ENCODE measurements at regions of chr11 and their contacts with region 1.

Region 1: DNA sequence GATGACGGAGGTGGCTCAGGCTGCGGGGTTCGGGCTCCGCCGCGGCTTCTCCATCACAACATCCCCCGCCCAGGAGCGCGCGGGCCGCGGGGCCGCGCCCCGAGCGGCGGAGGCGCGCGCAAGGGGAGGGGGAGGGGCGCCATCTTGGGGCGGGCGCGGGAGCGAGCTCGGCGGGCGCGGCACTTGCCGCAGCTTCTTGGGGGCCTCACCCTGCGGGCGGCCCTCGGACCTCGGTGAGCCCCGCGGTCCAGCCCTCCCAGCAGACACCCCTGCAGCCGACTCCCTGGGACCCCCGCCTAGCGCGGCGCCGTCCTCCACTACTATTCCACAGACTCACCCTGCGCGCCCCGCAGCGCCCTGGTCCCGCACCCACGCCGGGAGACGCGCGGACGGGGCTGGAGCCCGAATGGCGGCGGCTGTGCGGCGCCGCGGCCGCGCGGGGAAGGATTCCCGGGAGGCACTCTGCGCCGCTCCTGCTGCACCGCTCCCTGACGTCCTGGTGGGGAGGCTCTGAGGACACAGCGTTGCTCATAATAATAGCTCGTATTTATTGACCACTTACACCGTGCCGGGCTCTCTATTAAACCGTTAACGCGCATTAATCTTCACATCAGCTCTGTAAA is at the start of gene APBB1:
- DNase-seq: no peak
- H3K4me3 ChIP-seq: peak within 1 kb of the TSS; percentile 87
- H3K27me3 ChIP-seq: peaks cover 4% of the 10 kb centered on the region
- CTCF ChIP-seq: peak; percentile 19; the same call in 1 of the 2 replicates
- polyA plus RNA-seq, gene APBB1: 39.5 and 62.5 TPM in 2 replicates

Region 2: GRCh38 chr11:6431861-6432260 is 12.7 kb after region 1 on chr11:
- CTCF ChIA-PET with region 1: interaction called, 14 read pairs
- POLR2A ChIA-PET with region 1: no interaction called
- DNase-seq: no peak
- H3K4me3 ChIP-seq: no peak overlapping the region
- H3K27me3 ChIP-seq: no peaks in the 10 kb centered on the region
- CTCF ChIP-seq: no peak

Region 3: GRCh38 chr11:6544921-6545850 is 126.1 kb after region 1 on chr11:
- CTCF ChIA-PET with region 1: no interaction called
- POLR2A ChIA-PET with region 1: no interaction called
- DNase-seq: no peak
- H3K4me3 ChIP-seq: no peak overlapping the region
- H3K27me3 ChIP-seq: no peaks in the 10 kb centered on the region
- CTCF ChIP-seq: no peak